ENCODE measurements at regions of chr13 and their contacts with region 1.

Region 1: DNA sequence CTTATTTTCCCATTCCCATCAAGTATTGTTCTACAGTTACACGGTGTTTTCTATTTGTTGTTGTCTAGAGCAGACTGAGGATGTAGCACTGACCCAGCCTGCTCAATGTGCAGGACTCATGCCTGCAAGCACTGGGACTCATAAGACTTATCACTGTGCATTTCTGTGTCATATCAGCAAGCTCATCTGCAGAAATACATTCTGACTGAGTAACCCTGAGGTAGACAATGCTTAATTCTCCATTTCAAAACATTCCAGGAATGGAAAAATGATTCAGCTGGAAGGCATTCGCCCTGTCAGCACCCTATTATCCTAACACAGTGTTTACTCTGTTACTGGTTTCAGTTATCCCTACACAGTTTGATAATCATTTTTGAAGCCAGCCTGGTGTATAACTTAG is 2506.4 kb downstream of the PCDH9 start:
- DNase-seq: peak; percentile 65 to 70
- H3K4me3 ChIP-seq: no peak overlapping the region
- H3K4me3 Mint-ChIP-seq: peak overlapping the region; percentile 48
- H3K27ac Mint-ChIP-seq: peak overlapping the region; percentile 71
- H3K4me1 ChIP-seq: peaks cover 15% of the 10 kb centered on the region
- H3K4me1 Mint-ChIP-seq: peaks cover 29% of the 10 kb centered on the region
- H3K27me3 ChIP-seq: no peaks in the 10 kb centered on the region
- H3K27me3 Mint-ChIP-seq: no peaks in the 10 kb centered on the region
- CTCF ChIP-seq: no peak

Region 2: GRCh38 chr13:64675299-64675818 is 48.4 kb before region 1 on chr13:
- CTCF ChIA-PET with region 1: no interaction called
- POLR2A ChIA-PET with region 1: no interaction called
- intact Hi-C with region 1: loop called (anchors 1 kb)
- DNase-seq: peak in 1 of 2 experiments; percentile 64
- H3K4me3 ChIP-seq: no peak overlapping the region
- H3K4me3 Mint-ChIP-seq: peak overlapping the region; percentile 65
- H3K27ac Mint-ChIP-seq: peak overlapping the region; percentile 94
- H3K4me1 ChIP-seq: peaks cover 21% of the 10 kb centered on the region
- H3K4me1 Mint-ChIP-seq: peaks cover 17% of the 10 kb centered on the region
- H3K27me3 ChIP-seq: no peaks in the 10 kb centered on the region
- H3K27me3 Mint-ChIP-seq: no peaks in the 10 kb centered on the region
- CTCF ChIP-seq: no peak